ENCODE measurements at regions of chr10 and their contacts with region 1.

Region 1: GRCh38 chr10:31318854-31319601 is at the start of gene ZEB1:
- DNase-seq: peak; percentile 79
- H3K4me3 ChIP-seq: peak within 1 kb of the TSS; percentile 88 to 96 (median 94)
- H3K27ac ChIP-seq: peak within 1 kb of the TSS; percentile 96
- H3K4me1 ChIP-seq: peaks cover 64% of the 10 kb centered on the region
- H3K27me3 ChIP-seq: no peaks in the 10 kb centered on the region
- CTCF ChIP-seq: peak; percentile 19 to 55
- POLR2A ChIP-seq: no peak
- total RNA-seq, gene ZEB1: 117 and 130 TPM in 2 replicates

Region 2: DNA sequence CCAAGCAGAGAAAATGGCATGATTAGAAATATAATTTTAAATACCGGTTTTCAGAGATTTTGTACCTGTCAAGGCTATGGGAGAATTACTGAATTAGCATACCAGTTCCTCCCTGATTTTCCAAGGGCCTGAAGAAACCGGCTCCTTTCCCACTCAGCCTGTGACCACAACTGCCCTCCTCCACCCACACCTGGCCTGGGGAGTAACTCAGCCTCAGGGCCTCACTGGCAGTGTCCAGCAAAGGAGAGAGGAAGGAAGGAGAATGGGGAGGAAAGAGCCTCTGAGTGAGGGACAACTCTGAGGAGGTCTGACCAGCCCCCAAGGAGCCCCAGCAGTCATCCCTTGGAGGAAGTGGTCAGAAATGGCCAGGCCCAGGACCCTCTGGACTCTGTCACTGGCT is 591.5 kb before region 1 on chr10:
- CTCF ChIA-PET with region 1: no interaction called
- POLR2A ChIA-PET with region 1: no interaction called
- dilution Hi-C with region 1: no loop called
- intact Hi-C with region 1: loop called (anchors 1 kb)
- DNase-seq: no peak
- H3K4me3 ChIP-seq: no peak overlapping the region
- H3K27ac ChIP-seq: no peak overlapping the region
- H3K4me1 ChIP-seq: no peaks in the 10 kb centered on the region
- H3K27me3 ChIP-seq: no peaks in the 10 kb centered on the region
- CTCF ChIP-seq: no peak
- POLR2A ChIP-seq: no peak

Region 3: GRCh38 chr10:30857803-30858202 is 461.2 kb before region 1 on chr10:
- CTCF ChIA-PET with region 1: no interaction called
- POLR2A ChIA-PET with region 1: no interaction called
- dilution Hi-C with region 1: no loop called
- intact Hi-C with region 1: loop called (anchors 2 kb)
- DNase-seq: peak; percentile 50
- H3K4me3 ChIP-seq: no peak overlapping the region
- H3K27ac ChIP-seq: peak overlapping the region; percentile 97
- H3K4me1 ChIP-seq: peaks cover 63% of the 10 kb centered on the region
- H3K27me3 ChIP-seq: no peaks in the 10 kb centered on the region
- CTCF ChIP-seq: no peak
- POLR2A ChIP-seq: no peak

Region 4: GRCh38 chr10:30902621-30903396 is 416.2 kb before region 1 on chr10:
- CTCF ChIA-PET with region 1: no interaction called
- POLR2A ChIA-PET with region 1: no interaction called
- dilution Hi-C with region 1: no loop called
- intact Hi-C with region 1: no loop called
- DNase-seq: no peak
- H3K4me3 ChIP-seq: no peak overlapping the region
- H3K27ac ChIP-seq: no peak overlapping the region
- H3K4me1 ChIP-seq: no peaks in the 10 kb centered on the region
- H3K27me3 ChIP-seq: no peaks in the 10 kb centered on the region
- CTCF ChIP-seq: no peak
- POLR2A ChIP-seq: no peak

Region 5: DNA sequence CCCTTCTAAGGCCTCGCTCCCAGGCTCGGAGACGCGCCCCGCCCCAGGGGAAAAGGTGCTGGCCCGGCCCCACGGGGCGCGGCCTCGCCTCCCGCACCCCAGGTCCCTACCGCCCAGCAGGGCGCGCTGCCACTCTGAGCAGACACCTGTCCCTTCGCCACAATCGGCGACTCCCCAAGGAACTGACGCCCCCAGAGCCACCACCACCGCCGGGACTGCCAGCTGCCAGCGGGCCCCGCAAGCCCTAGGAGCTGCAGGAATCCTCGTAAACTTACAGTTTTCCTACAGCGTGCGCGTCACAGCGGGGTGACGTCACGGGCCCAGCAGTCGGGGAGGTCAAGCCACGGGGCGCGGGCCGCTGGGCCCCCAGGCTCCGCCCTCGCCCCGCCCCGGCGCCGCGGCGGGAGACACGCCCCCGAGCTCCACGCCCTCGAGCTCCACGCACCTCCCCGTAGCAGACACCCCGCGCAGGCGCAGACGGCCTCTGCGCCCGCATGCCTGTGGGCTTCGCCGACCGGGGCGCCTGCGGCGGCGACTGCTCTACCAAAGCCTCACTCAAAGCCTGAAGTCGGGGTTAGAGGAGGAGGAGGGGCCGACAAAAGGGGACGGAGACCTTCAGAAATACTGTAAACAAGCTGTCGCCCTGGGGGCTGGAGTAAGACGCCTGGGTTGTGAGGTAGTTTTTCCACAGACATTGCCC is 287.3 kb before region 1 on chr10 and contains the start of gene ZNF438:
- CTCF ChIA-PET with region 1: interaction called, 8 read pairs
- POLR2A ChIA-PET with region 1: interaction called, 4 read pairs
- dilution Hi-C with region 1: no loop called
- intact Hi-C with region 1: loop called (anchors 1 kb)
- DNase-seq: peak; percentile 97
- H3K4me3 ChIP-seq: peak within 1 kb of the TSS in 2 of 3 experiments; percentile 50 to 66
- H3K27ac ChIP-seq: peak within 1 kb of the TSS; percentile 92
- H3K4me1 ChIP-seq: peaks cover 32% of the 10 kb centered on the region
- H3K27me3 ChIP-seq: no peaks in the 10 kb centered on the region
- CTCF ChIP-seq: peak; percentile 40 to 44
- POLR2A ChIP-seq: peak; percentile 82
- total RNA-seq, gene ZNF438: 11.2 and 15.1 TPM in 2 replicates

Region 6: DNA sequence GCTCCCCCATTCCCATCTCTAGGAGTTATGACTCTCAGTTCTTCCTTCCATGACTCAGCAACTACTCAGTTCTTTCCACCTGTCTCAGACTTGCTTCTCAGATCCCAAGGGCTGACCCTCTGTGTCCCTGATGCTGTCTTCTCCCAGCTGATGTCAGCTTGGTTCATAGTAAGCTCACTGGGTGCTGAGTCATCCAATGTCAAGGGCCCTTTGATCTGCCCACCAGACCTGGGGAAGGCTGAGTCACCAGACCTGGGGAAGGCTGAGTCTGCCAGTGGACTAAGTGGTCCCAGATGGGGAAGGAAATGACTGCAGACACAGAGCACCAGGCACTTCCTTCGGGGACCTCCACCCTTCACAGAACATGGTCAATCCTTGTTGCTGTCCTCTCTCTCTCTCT is 76.1 kb before region 1 on chr10:
- CTCF ChIA-PET with region 1: no interaction called
- POLR2A ChIA-PET with region 1: no interaction called
- dilution Hi-C with region 1: no loop called
- intact Hi-C with region 1: loop called (anchors 1 kb)
- DNase-seq: peak; percentile 89
- H3K4me3 ChIP-seq: no peak overlapping the region
- H3K27ac ChIP-seq: peak overlapping the region; percentile 55
- H3K4me1 ChIP-seq: peaks cover 19% of the 10 kb centered on the region
- H3K27me3 ChIP-seq: no peaks in the 10 kb centered on the region
- CTCF ChIP-seq: no peak
- POLR2A ChIP-seq: peak; percentile 36

Region 7: GRCh38 chr10:31288962-31289361 is 30.1 kb before region 1 on chr10:
- CTCF ChIA-PET with region 1: no interaction called
- POLR2A ChIA-PET with region 1: no interaction called
- dilution Hi-C with region 1: no loop called
- intact Hi-C with region 1: no loop called
- DNase-seq: no peak
- H3K4me3 ChIP-seq: no peak overlapping the region
- H3K27ac ChIP-seq: no peak overlapping the region
- H3K4me1 ChIP-seq: no peaks in the 10 kb centered on the region
- H3K27me3 ChIP-seq: no peaks in the 10 kb centered on the region
- CTCF ChIP-seq: no peak
- POLR2A ChIP-seq: no peak

Region 8: DNA sequence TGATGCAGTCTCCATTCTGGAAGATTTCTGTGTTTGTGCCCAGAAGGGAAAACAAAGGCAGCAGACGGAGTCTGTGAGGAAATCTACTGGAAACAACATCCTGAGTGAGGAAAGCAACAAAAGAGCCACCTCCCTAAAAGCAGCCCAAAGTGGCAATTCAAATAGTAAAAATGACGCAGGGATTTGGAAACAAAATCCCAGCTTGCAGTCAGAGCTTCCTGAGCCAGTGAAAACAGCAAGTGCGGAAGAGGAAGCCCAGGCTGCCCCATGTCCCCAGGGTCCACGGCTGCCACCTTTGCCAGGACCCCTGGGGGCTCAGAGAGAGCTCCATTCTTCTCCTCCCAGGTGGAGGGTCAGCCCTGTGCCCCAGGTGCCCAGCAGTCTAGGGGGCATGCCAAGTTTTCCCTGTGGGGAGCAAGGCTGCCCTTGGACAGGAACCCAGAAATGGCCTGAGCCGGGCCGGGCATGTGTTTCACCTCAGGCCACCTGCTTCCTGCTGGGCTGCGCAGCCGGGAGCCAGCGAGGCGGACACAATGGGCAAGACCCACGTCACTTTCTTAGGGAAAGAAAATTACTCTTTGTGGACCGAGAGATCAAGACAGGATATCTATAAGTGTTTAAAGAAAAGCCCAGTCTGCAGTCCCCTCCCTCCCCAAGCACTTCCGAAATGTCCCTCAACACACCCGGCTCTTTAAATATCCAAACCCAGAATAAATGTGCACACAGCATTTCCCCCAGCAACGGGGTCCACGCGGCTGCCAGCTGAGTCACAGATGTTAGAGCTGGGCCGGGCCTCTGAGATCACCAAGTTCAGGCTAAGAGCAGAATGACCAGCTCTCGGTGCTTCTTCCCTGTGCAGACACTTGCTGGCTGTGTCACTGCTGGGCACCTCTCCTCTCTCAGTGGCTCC is 378.5 kb after region 1 on chr10:
- CTCF ChIA-PET with region 1: no interaction called
- POLR2A ChIA-PET with region 1: no interaction called
- dilution Hi-C with region 1: no loop called
- intact Hi-C with region 1: loop called (anchors 1 kb)
- DNase-seq: peak; percentile 98
- H3K4me3 ChIP-seq: peak overlapping the region in 1 of 3 experiments; percentile 24
- H3K27ac ChIP-seq: peak overlapping the region; percentile 90
- H3K4me1 ChIP-seq: peaks cover 57% of the 10 kb centered on the region
- H3K27me3 ChIP-seq: no peaks in the 10 kb centered on the region
- CTCF ChIP-seq: no peak
- POLR2A ChIP-seq: peak; percentile 75

Measured in endothelial cell of umbilical vein (primary cell).